ENCODE measurements at regions of chr2 and their contacts with region 1.

Region 1: DNA sequence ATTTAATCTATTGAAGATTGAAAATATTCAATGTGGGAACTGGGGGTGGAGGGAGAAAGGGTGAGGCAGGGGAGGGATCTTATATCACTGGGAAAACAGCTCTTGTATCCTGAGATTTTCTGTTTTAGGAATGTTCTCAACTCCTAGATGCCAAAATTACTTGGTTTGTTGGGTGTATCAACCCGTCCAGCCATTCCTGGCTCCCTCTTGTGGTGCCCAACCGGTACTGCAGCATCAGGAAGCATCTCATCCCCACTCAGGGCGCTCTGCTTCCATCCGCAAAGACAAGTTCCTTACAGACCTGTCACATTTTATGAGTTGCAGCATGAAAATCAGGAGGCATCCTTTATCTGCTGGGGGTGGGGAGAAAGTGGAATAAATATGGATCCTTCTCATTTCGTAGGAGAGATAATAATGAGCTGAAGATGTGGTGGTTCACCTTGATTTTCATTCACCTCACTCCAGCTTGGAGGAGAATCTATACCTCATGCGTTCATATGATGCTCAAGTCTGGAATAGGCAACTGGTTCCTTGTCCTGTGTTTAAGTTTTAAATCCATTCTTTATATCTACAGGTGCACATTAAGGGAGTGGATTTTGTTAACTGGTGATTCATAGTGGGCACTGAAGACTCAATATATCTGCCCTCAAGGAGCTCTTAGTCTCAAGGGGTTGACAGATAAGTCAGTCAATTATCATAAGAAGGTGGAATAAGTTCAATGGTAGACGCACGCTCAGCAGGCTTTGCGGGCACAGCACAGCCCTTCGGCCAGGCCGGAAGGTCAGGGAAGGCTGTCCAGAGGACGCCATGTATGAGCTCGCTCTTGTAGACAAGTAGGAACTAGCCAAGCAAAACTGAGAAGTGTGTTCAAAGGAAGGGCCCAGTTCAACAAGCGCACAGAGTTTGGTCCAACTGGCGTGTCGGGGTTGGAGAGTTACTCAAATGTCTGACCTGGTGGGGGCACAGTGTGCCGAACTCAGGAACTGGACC is 127.3 kb downstream of the RNF144A start:
- DNase-seq: peak; percentile 16
- ATAC-seq: peak; percentile 84
- H3K4me3 ChIP-seq: no peak overlapping the region
- H3K27ac ChIP-seq: no peak overlapping the region
- H3K4me1 ChIP-seq: no peaks in the 10 kb centered on the region
- H3K27me3 ChIP-seq: no peaks in the 10 kb centered on the region
- CTCF ChIP-seq: peak; percentile 89 to 98 (median 98); a peak in 5 of 6 replicates
- EP300 ChIP-seq: no peak
- POLR2A ChIP-seq: no peak
- RAD21 ChIP-seq: peak; percentile 73

Region 2: GRCh38 chr2:6626401-6627012 is 418.0 kb before region 1 on chr2:
- CTCF ChIA-PET with region 1: no interaction called
- POLR2A ChIA-PET with region 1: no interaction called
- RAD21 ChIA-PET with region 1: no interaction called
- SMC1A ChIA-PET with region 1: no interaction called
- in situ Hi-C with region 1: no loop called
- intact Hi-C with region 1: no loop called
- DNase-seq: no peak
- ATAC-seq: no peak
- H3K4me3 ChIP-seq: no peak overlapping the region
- H3K27ac ChIP-seq: no peak overlapping the region
- H3K4me1 ChIP-seq: no peaks in the 10 kb centered on the region
- H3K27me3 ChIP-seq: no peaks in the 10 kb centered on the region
- CTCF ChIP-seq: no peak
- EP300 ChIP-seq: no peak
- POLR2A ChIP-seq: no peak
- RAD21 ChIP-seq: no peak

Region 3: GRCh38 chr2:6909431-6910385 is 134.8 kb before region 1 on chr2:
- CTCF ChIA-PET with region 1: interaction called, 33 read pairs
- POLR2A ChIA-PET with region 1: interaction called, 3 read pairs
- RAD21 ChIA-PET with region 1: interaction called, 4 read pairs
- SMC1A ChIA-PET with region 1: interaction called, 4 read pairs
- in situ Hi-C with region 1: no loop called
- intact Hi-C with region 1: no loop called
- DNase-seq: peak; percentile 87
- ATAC-seq: peak; percentile 97
- H3K4me3 ChIP-seq: no peak overlapping the region; the same call in 1 of the 2 replicates
- H3K27ac ChIP-seq: peak overlapping the region; percentile 90
- H3K4me1 ChIP-seq: peaks cover 30% of the 10 kb centered on the region
- H3K27me3 ChIP-seq: no peaks in the 10 kb centered on the region
- CTCF ChIP-seq: no peak
- EP300 ChIP-seq: peak; percentile 94
- POLR2A ChIP-seq: no peak
- RAD21 ChIP-seq: 0 out of 2 replicates have a peak, but pooled peaks have one; percentile 5

Region 4: GRCh38 chr2:6922201-6922685 is 122.3 kb before region 1 on chr2:
- CTCF ChIA-PET with region 1: interaction called, 25 read pairs
- POLR2A ChIA-PET with region 1: no interaction called
- RAD21 ChIA-PET with region 1: interaction called, 5 read pairs
- SMC1A ChIA-PET with region 1: interaction called, 5 read pairs
- in situ Hi-C with region 1: no loop called
- intact Hi-C with region 1: no loop called
- DNase-seq: no peak
- ATAC-seq: peak; percentile 23; the same call in 2 of the 3 replicates
- H3K4me3 ChIP-seq: no peak overlapping the region
- H3K27ac ChIP-seq: no peak overlapping the region
- H3K4me1 ChIP-seq: 0 out of 2 replicates have a peak, but pooled peaks cover 5% of the 10 kb centered on the region
- H3K27me3 ChIP-seq: no peaks in the 10 kb centered on the region
- CTCF ChIP-seq: peak in 2 of 3 experiments; percentile 22 to 25; a peak in 3 of 6 replicates
- EP300 ChIP-seq: no peak
- POLR2A ChIP-seq: no peak
- RAD21 ChIP-seq: 0 out of 2 replicates have a peak, but pooled peaks have one; percentile 26

Region 5: DNA sequence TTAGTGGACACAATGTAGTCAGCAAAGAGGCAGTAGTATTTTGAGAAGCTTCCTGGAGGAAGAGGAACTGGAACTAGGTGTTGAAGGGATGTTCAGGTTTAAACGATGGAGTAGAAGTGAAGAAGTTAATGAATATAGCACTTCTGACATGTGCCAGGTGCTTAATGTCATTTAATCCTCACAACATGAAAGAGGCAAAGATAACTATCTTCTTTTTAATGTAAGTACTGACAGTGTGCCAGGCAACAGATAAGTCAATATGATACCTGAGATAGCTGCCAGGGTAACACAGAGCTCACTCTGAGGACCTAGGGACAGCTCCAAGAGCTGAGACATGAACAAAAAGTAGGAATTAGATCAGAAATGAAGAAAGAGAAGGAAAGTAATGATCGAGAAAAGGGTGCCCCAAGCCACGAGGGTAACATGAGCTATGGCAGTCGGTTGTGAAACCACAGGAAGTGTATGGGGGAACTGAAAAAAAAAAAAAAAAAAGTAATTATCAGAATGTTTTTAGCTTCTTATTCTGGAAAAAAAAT is 13.4 kb after region 1 on chr2:
- CTCF ChIA-PET with region 1: interaction called, 38 read pairs
- POLR2A ChIA-PET with region 1: no interaction called
- RAD21 ChIA-PET with region 1: interaction called, 9 read pairs
- SMC1A ChIA-PET with region 1: interaction called, 12 read pairs
- in situ Hi-C with region 1: no loop called
- intact Hi-C with region 1: no loop called
- DNase-seq: peak; percentile 48
- ATAC-seq: peak; percentile 82
- H3K4me3 ChIP-seq: no peak overlapping the region
- H3K27ac ChIP-seq: peak overlapping the region; percentile 18; the same call in 1 of the 2 replicates
- H3K4me1 ChIP-seq: peaks cover 13% of the 10 kb centered on the region
- H3K27me3 ChIP-seq: no peaks in the 10 kb centered on the region
- CTCF ChIP-seq: no peak
- EP300 ChIP-seq: peak in 1 of 2 experiments; percentile 49; a peak in 1 of 4 replicates
- POLR2A ChIP-seq: no peak
- RAD21 ChIP-seq: no peak

Region 6: DNA sequence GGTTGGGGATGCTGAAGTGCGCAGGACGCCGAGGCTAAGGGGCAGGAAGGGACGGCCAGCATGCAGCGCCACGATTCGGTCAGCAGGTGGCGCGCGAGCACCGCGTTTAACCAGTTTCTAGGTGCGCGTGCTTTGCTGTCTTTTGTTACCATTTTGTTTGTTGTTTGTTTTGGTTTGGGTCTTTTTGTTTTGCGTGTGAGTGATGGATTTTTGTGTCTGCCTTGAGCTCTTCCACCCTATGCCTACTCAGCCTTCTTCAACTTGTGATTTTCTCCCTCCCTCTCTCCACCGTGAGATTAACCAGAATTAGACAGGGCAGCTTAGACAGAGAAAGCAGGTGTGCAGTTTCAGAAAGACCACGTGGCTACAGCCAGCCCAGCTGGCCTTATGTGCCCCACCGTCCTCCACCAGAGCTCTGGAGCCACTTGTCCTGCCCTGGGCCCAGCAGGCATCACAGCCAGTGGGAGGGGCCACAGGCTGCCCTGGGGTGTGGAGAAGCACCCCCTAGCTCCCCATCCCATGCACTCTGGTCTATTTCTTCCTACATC is 52.9 kb after region 1 on chr2:
- CTCF ChIA-PET with region 1: interaction called, 10 read pairs
- POLR2A ChIA-PET with region 1: no interaction called
- RAD21 ChIA-PET with region 1: no interaction called
- SMC1A ChIA-PET with region 1: interaction called, 4 read pairs
- in situ Hi-C with region 1: no loop called
- intact Hi-C with region 1: loop called (anchors 5 kb)
- DNase-seq: peak; percentile 35
- ATAC-seq: peak; percentile 98
- H3K4me3 ChIP-seq: peak overlapping the region; percentile 48; the same call in 1 of the 2 replicates
- H3K27ac ChIP-seq: no peak overlapping the region
- H3K4me1 ChIP-seq: peaks cover 4% of the 10 kb centered on the region; the same call in 1 of the 2 replicates
- H3K27me3 ChIP-seq: no peaks in the 10 kb centered on the region
- CTCF ChIP-seq: peak; percentile 97 to 99 (median 98); a peak in 5 of 6 replicates
- EP300 ChIP-seq: no peak
- POLR2A ChIP-seq: no peak
- RAD21 ChIP-seq: peak; percentile 84

Region 7: DNA sequence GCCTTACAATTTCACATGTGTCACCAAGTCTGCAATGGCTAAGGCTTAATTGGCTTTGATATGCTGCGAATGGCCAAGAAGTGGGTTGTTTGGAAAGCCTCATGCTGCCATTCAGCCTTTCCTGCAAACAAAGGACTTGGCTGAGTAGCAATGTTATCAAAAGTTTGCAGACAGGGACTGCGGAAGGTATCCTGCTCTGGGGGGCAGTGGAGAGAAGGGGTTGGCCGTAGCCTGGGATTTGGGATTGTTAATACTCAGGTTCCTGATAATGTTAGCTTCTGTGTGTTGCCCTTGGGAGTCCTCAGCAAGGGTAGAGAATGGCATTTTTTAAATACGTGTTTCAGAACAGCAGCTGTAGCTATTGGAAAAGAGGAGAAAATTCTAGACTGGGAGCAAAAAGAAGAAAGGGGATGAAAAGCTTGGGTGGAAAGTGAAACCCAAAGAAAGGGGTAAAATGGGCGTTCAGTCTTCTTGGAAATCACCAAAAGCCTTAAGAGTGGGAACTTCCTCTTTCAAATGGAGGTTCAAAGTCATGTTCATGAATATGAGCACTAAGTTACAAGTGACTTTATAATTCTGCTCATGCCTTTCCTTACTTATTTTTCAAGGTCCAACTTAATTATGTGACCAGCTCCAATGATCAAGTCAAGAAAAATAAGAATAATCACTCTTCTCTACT is 197.8 kb after region 1 on chr2:
- CTCF ChIA-PET with region 1: no interaction called
- POLR2A ChIA-PET with region 1: no interaction called
- RAD21 ChIA-PET with region 1: no interaction called
- SMC1A ChIA-PET with region 1: no interaction called
- in situ Hi-C with region 1: no loop called
- intact Hi-C with region 1: no loop called
- DNase-seq: peak; percentile 9
- ATAC-seq: peak; percentile 65
- H3K4me3 ChIP-seq: no peak overlapping the region
- H3K27ac ChIP-seq: no peak overlapping the region
- H3K4me1 ChIP-seq: no peaks in the 10 kb centered on the region
- H3K27me3 ChIP-seq: no peaks in the 10 kb centered on the region
- CTCF ChIP-seq: no peak
- EP300 ChIP-seq: no peak
- POLR2A ChIP-seq: no peak
- RAD21 ChIP-seq: no peak